Activated T-helper 1 cell treated with anti-CD3 and anti-CD28 coated beads, Interleukin-12 subunit alpha, Interleukin-12 subunit beta, Interleukin-2, Interleukin-4 antibody, amounts not matched to agents 30 ng/mL and 10 ng/mL and 1 ng/mL, durations not matched to agents 14 hours and 24 hours and 36 hours (primary cell): ENCODE measurements at regions of chr3 and their contacts with region 1.

Region 1: DNA sequence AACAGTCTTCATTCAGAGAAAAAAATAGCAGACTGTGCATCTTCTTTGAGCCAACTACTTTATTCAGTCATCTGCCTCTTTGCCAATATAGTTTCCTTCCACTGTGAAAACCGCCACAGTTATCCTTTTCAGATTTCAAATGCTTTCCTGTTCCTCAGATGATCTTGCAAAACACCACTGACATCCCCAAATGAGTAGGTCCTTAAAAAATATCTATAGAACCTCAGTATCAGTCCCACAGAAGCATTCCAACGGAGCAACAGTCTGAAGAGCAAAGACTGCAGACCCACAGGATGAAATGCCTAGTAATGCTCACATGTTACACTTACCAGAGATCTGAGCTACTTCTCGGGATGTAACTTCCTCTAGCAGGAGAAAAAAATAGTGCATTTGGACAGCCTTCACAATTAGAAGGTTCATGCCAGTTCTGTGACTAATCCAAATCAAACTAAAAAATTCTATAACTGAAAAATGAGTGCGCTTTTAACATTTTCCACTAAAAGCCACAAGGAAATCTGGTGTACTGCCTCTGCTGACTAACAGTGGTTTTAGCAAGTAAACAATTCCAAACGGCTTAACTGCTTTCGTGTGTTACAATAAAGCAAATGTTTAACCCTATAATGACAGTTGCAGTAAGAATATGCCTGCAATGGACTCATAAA is at the start of gene ANKRD28:
- DNase-seq: peak; percentile 27
- H3K4me3 Mint-ChIP-seq: peak within 1 kb of the TSS; percentile 88
- H3K27ac Mint-ChIP-seq: peak within 1 kb of the TSS; percentile 99
- H3K4me1 Mint-ChIP-seq: peaks cover 92% of the 10 kb centered on the region
- H3K27me3 Mint-ChIP-seq: no peaks in the 10 kb centered on the region
- total RNA-seq, gene ANKRD28: 39.6 and 42.9 TPM in 2 replicates

Region 2: DNA sequence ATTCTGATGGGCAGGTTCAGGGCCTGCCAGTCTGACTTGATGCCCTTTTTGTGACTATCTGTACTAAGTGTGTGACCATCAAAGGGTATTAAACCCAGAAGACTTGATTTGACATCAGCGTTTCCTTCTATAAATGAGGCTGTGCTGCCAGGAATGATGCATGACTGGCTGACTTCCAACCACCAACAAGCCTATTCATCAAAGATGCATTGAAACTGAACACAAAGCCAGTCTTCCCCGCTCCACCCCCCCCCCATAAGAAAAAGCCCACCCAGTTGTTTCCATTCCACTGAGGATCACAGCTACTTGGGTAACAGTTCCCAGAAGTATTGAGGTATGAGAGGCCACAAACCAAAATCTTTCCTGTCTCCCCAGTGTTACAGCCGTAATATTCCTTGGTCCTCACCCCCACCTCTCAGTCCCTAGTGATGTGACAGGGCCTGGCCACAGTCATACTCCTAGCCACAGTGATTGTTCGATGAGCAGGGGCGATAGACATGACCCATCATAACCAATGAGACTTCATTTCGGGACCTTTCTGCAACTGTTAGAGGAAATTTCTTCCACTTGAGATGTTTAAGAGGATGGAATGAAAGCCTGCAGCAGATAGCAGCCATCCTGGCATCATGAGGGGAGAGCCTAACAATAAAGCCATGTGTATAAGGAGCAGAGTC is 488.0 kb before region 1 on chr3:
- intact Hi-C with region 1: loop called (anchors 2 kb)
- DNase-seq: no peak
- H3K4me3 Mint-ChIP-seq: peak overlapping the region; percentile 66
- H3K27ac Mint-ChIP-seq: peak overlapping the region; percentile 94
- H3K4me1 Mint-ChIP-seq: peaks cover 66% of the 10 kb centered on the region
- H3K27me3 Mint-ChIP-seq: no peaks in the 10 kb centered on the region

Region 3: GRCh38 chr3:15535732-15536131 is 262.0 kb before region 1 on chr3:
- intact Hi-C with region 1: loop called (anchors 5 kb)
- DNase-seq: peak; percentile 32
- H3K4me3 Mint-ChIP-seq: peak overlapping the region; percentile 60
- H3K27ac Mint-ChIP-seq: peak overlapping the region; percentile 75
- H3K4me1 Mint-ChIP-seq: peaks cover 55% of the 10 kb centered on the region
- H3K27me3 Mint-ChIP-seq: no peaks in the 10 kb centered on the region

Region 4: DNA sequence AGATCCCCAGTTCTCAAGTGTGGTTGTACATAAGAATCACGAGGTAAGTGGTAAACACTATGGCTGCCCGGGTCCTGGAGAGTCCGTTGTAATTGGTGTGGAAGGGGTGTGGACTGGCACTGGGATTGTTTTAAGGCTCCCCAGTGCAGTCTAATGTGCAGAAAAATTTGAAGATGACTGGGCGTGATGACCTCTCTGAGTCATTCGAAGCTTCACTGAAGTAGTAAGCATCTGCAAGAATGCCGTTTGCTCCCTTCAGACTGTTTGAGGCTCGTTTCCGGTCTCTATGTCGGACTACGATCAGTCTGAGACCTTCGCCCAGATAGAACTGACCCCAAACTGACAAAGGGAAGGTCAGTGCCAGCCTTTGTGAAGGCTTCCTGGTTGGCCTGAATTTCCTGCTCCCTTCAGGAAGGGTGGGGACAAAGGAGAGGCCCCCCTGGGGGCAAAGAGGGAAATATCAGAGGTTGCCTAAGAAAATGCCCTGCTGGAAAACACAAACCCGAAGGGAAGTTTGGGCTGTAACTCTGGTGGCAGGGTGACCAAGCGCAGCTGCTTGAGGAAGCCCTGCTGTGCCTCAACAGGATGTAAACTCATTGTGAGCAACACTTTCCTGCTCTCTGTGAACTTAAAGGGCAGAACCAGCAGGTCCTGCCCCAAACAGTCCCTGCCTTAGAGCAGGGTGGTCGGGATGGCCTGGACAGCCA is 161.6 kb before region 1 on chr3:
- intact Hi-C with region 1: loop called (anchors 1 kb)
- DNase-seq: peak; percentile 30
- H3K4me3 Mint-ChIP-seq: peak overlapping the region; percentile 51
- H3K27ac Mint-ChIP-seq: peak overlapping the region; percentile 79
- H3K4me1 Mint-ChIP-seq: peaks cover 67% of the 10 kb centered on the region
- H3K27me3 Mint-ChIP-seq: no peaks in the 10 kb centered on the region

Region 5: GRCh38 chr3:15743587-15744009 is 54.2 kb before region 1 on chr3:
- intact Hi-C with region 1: loop called (anchors 1 kb)
- DNase-seq: no peak
- H3K4me3 Mint-ChIP-seq: no peak overlapping the region
- H3K27ac Mint-ChIP-seq: peak overlapping the region; percentile 55
- H3K4me1 Mint-ChIP-seq: peaks cover 51% of the 10 kb centered on the region
- H3K27me3 Mint-ChIP-seq: no peaks in the 10 kb centered on the region

Region 6: DNA sequence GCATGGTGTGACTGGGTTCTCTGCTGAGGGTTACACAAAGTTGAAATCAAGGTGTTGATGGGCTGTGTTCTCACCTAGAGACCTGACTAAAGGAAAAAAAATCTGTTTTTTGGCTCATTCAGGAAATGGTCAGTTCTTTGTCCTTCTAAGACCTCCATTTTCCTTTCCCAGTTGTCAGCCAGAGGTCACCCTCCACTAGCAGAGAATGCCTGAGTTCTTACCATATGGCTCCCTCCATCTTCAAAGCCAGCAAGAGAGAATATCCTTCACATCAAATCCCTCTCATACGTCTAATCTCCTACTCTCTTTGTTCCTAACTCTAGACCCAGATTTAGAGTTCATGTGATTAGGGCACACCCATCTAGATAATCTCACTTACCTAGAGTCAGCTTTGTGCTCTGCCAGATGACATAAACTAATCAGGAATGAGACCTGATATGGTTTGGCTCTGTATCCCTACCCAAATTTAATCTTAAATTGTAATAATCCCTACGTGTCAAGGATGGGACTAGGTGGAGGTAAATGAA is 19.4 kb before region 1 on chr3:
- intact Hi-C with region 1: loop called (anchors 1 kb)
- DNase-seq: no peak
- H3K4me3 Mint-ChIP-seq: no peak overlapping the region
- H3K27ac Mint-ChIP-seq: no peak overlapping the region
- H3K4me1 Mint-ChIP-seq: peaks cover 33% of the 10 kb centered on the region
- H3K27me3 Mint-ChIP-seq: no peaks in the 10 kb centered on the region

Region 7: GRCh38 chr3:15859507-15860013 is 61.8 kb after region 1 on chr3:
- intact Hi-C with region 1: loop called (anchors 1 kb)
- DNase-seq: peak; percentile 78
- H3K4me3 Mint-ChIP-seq: peak overlapping the region; percentile 92
- H3K27ac Mint-ChIP-seq: peak overlapping the region; percentile 91
- H3K4me1 Mint-ChIP-seq: peaks cover 33% of the 10 kb centered on the region
- H3K27me3 Mint-ChIP-seq: peaks cover 3% of the 10 kb centered on the region

Region 8: GRCh38 chr3:15923640-15924405 is 126.0 kb after region 1 on chr3:
- intact Hi-C with region 1: no loop called
- DNase-seq: no peak
- H3K4me3 Mint-ChIP-seq: no peak overlapping the region
- H3K27ac Mint-ChIP-seq: no peak overlapping the region
- H3K4me1 Mint-ChIP-seq: no peaks in the 10 kb centered on the region
- H3K27me3 Mint-ChIP-seq: peaks cover 6% of the 10 kb centered on the region